Activated CD8-positive, alpha-beta T cell treated with anti-CD3 and anti-CD28 coated beads, Interleukin-2, amount 10 ng/mL, durations not matched to agents 7 days and 5 days (primary cell): ENCODE measurements at regions of chr17 and their contacts with region 1.

Region 1: DNA sequence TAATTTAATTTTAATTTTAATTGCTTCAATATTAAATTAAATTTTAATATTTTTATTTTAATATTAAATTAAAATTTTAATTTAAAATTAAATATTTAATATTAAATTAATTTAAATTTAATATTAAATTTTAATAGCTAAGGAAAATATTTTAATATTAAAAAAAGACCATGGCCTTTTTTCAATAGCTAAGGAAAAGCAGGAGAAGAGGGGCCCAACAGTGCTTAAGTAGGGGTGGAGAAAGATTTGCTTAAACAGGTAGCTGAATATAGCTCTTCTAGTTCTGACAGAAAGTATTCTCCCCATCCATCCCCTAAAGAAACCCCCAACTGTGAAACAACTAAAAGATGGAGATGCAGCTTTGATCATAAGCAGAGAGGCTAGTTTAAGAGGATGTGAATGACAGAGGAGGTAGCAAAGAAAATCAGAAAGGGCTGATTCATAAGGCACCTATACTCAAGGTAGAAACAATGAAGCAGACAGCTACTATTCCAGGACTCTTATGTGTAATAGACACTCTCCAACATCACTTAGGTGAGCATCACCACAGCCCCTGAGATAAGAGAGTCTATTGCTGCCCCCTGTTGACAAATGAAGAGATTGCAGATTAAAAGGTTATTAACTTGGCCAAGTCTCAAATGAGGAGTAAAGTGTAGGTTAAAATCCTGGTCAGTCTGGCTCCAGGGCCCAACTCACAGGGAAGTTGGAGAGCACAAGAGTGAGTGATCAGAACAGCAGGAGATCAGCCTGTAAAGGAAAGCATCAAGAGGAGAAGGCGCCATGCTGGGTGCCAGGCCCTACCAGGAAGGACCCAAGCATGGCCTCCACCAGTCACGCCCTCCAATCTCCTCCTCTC is 7.8 kb upstream of the RNASEK start:
- DNase-seq: peak; percentile 70
- ATAC-seq: peak; percentile 96
- H3K4me3 Mint-ChIP-seq: no peak overlapping the region
- H3K27ac Mint-ChIP-seq: peak overlapping the region; percentile 47
- H3K4me1 Mint-ChIP-seq: peaks cover 24% of the 10 kb centered on the region
- H3K27me3 Mint-ChIP-seq: no peaks in the 10 kb centered on the region

Region 2: DNA sequence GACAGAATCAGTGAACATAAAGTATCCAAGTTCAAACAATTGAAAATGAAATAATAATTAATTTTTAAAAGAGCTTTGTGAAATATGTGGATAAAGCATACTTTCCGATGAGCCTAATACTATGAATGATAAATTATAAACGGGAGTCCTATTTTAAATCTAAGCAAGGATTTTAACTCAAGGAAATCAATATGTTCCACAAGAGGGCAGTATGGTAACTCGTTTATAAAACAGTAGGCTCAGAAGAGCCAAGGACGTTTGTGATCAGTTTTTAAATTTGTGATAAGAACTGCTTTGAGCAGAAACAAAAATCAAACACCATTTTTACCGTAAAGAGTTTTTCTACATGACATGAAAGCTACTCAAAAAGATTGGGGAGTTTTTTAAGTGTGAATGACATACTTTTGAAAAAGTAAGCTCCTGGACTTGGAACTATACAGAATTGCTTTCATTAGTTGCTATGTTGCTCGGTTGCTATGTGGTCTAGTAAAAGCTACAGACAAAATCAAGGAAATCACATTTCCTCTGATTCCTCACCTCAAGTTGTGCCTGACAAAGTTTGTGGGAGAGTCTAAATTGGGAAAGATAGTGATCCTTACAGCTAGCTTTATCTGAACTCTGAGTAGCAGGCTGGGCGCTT is 161.3 kb before region 1 on chr17:
- CTCF ChIA-PET with region 1: interaction called, 63 read pairs
- POLR2A ChIA-PET with region 1: no interaction called
- DNase-seq: no peak
- ATAC-seq: no peak
- H3K4me3 Mint-ChIP-seq: no peak overlapping the region
- H3K27ac Mint-ChIP-seq: no peak overlapping the region
- H3K4me1 Mint-ChIP-seq: peaks cover 8% of the 10 kb centered on the region
- H3K27me3 Mint-ChIP-seq: peaks cover 59% of the 10 kb centered on the region

Region 3: GRCh38 chr17:6919158-6919557 is 85.5 kb before region 1 on chr17:
- CTCF ChIA-PET with region 1: interaction called, 206 read pairs
- POLR2A ChIA-PET with region 1: no interaction called
- DNase-seq: no peak
- ATAC-seq: no peak
- H3K4me3 Mint-ChIP-seq: no peak overlapping the region
- H3K27ac Mint-ChIP-seq: no peak overlapping the region
- H3K4me1 Mint-ChIP-seq: peaks cover 16% of the 10 kb centered on the region
- H3K27me3 Mint-ChIP-seq: peaks cover 27% of the 10 kb centered on the region

Region 4: GRCh38 chr17:6936370-6937028 is 68.1 kb before region 1 on chr17:
- CTCF ChIA-PET with region 1: interaction called, 21 read pairs
- POLR2A ChIA-PET with region 1: no interaction called
- DNase-seq: no peak
- ATAC-seq: no peak
- H3K4me3 Mint-ChIP-seq: peak overlapping the region; percentile 32
- H3K27ac Mint-ChIP-seq: no peak overlapping the region
- H3K4me1 Mint-ChIP-seq: peaks cover 23% of the 10 kb centered on the region
- H3K27me3 Mint-ChIP-seq: no peaks in the 10 kb centered on the region

Region 5: GRCh38 chr17:7021993-7022778 is 17.6 kb after region 1 on chr17:
- CTCF ChIA-PET with region 1: interaction called, 67 read pairs
- POLR2A ChIA-PET with region 1: interaction called, 6 read pairs
- DNase-seq: peak; percentile 86
- ATAC-seq: peak; percentile 74
- H3K4me3 Mint-ChIP-seq: peak overlapping the region; percentile 8
- H3K27ac Mint-ChIP-seq: peak overlapping the region; percentile 55
- H3K4me1 Mint-ChIP-seq: peaks cover 73% of the 10 kb centered on the region
- H3K27me3 Mint-ChIP-seq: peaks cover 2% of the 10 kb centered on the region